ENCODE measurements at regions of chr1 and their contacts with region 1.

Region 1: GRCh38 chr1:114716304-114717170 is at the start of gene NRAS:
- DNase-seq: peak; percentile 96
- ATAC-seq: peak; percentile 96
- H3K4me3 ChIP-seq: peak within 1 kb of the TSS; percentile 69 to 95 (median 89)
- H3K4me3 Mint-ChIP-seq: peak within 1 kb of the TSS; percentile 99
- H3K27ac ChIP-seq: peak within 1 kb of the TSS; percentile 97
- H3K27ac Mint-ChIP-seq: peak within 1 kb of the TSS; percentile 99
- H3K4me1 ChIP-seq: peaks cover 15 to 16% of the 10 kb centered on the region in 2 donors
- H3K4me1 Mint-ChIP-seq: peaks cover 29% of the 10 kb centered on the region
- H3K27me3 ChIP-seq: no peaks in the 10 kb centered on the region
- H3K27me3 Mint-ChIP-seq: no peaks in the 10 kb centered on the region
- CTCF ChIP-seq: no peak
- total RNA-seq, gene NRAS: 35.0 and 35.3 TPM in 2 replicates

Region 2: GRCh38 chr1:114670083-114671010 is 46.2 kb before region 1 on chr1:
- CTCF ChIA-PET with region 1: interaction called, 4 read pairs
- POLR2A ChIA-PET with region 1: interaction called, 4 read pairs
- intact Hi-C with region 1: loop called (anchors 1 kb)
- DNase-seq: peak; percentile 91
- ATAC-seq: peak; percentile 99
- H3K4me3 ChIP-seq: peak overlapping the region; percentile 65 to 84 (median 72)
- H3K4me3 Mint-ChIP-seq: peak overlapping the region; percentile 99
- H3K27ac ChIP-seq: no peak overlapping the region
- H3K27ac Mint-ChIP-seq: peak overlapping the region; percentile 73
- H3K4me1 ChIP-seq: peaks cover 6 to 14% of the 10 kb centered on the region in 2 donors
- H3K4me1 Mint-ChIP-seq: peaks cover 14% of the 10 kb centered on the region
- H3K27me3 ChIP-seq: peaks cover 0 to 6% (median 0%) of the 10 kb centered on the region in 4 experiments
- H3K27me3 Mint-ChIP-seq: peaks cover 45% of the 10 kb centered on the region
- CTCF ChIP-seq: no peak

Region 3: GRCh38 chr1:114780344-114781226 is 64.0 kb after region 1 on chr1 and contains the start of gene SIKE1:
- CTCF ChIA-PET with region 1: interaction called, 3 read pairs
- POLR2A ChIA-PET with region 1: interaction called, 6 read pairs
- intact Hi-C with region 1: loop called (anchors 1 kb)
- DNase-seq: peak; percentile 94
- ATAC-seq: peak; percentile 97
- H3K4me3 ChIP-seq: peak within 1 kb of the TSS; percentile 94 to 99 (median 96)
- H3K4me3 Mint-ChIP-seq: peak within 1 kb of the TSS; percentile 100
- H3K27ac ChIP-seq: peak within 1 kb of the TSS; percentile 75 to 84
- H3K27ac Mint-ChIP-seq: peak within 1 kb of the TSS; percentile 98
- H3K4me1 ChIP-seq: peaks cover 9 to 10% of the 10 kb centered on the region in 2 donors
- H3K4me1 Mint-ChIP-seq: peaks cover 26% of the 10 kb centered on the region
- H3K27me3 ChIP-seq: no peaks in the 10 kb centered on the region
- H3K27me3 Mint-ChIP-seq: peaks cover 9% of the 10 kb centered on the region
- CTCF ChIP-seq: no peak
- total RNA-seq, gene SIKE1: 44.8 and 47.8 TPM in 2 replicates